Esophagus squamous epithelium (tissue), 5 donors: ENCODE measurements at regions of chr4 and their contacts with region 1.

Region 1: DNA sequence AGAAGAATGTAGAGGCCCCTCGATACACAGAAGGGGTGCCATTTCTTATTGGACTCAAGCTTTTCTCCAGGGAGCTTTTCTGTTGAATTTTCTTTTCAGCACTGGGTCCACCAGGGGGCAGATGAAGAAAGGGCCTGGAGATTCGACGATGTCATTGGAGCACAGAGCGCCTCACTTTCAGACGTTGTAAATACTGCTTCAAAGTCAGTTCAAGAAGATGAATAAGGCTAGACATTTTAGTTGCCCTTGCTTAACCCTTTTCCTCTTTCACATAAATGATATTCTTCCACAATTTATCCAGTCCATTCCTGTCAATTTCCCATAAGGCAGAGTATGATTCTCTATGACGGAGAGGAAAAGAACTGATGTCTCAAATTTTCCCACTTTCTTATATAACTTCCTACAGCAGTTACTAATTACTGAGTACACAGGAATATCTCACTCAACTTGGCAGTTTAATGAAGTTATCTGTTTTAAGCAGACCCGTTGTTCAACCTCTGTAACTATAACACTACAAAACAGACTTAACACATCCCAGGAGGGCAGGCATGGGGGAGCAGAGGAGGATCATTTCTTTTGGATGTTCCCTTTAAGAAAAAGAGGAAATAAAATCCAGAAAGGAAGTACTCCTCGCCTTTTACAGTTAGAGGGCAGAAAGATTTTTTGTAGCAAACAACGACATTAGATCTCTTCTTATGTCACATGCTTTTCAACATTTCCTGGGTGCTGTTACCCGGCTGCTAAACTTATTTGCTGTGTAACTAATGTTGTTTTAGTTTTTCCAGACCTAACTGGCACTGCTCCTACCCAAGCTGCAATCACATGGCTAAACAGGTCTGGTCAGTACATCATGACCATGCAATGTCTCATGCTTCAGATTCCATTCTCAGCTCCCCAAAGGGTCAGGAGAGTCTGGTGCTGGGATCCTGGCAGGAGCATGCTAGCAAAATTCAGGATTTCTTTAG is 12.2 kb upstream of the CENPU start:
- DNase-seq: no peak
- H3K4me3 ChIP-seq: peak overlapping the region in 1 of 4 donors; percentile 34
- H3K27ac ChIP-seq: peak overlapping the region; percentile 84 to 95 (median 89)
- H3K4me1 ChIP-seq: peaks cover 34 to 48% (median 35%) of the 10 kb centered on the region in 3 donors
- H3K27me3 ChIP-seq: no peaks in the 10 kb centered on the region
- CTCF ChIP-seq: peak; percentile 49 to 84 (median 80)
- POLR2A ChIP-seq: no peak

Region 2: GRCh38 chr4:184983672-184984356 is 237.7 kb after region 1 on chr4:
- intact Hi-C with region 1: loop called (anchors 10 kb)
- DNase-seq: no peak
- H3K4me3 ChIP-seq: peak overlapping the region in 1 of 4 donors; percentile 12
- H3K27ac ChIP-seq: no peak overlapping the region
- H3K4me1 ChIP-seq: peaks cover 0 to 10% (median 7%) of the 10 kb centered on the region in 3 donors
- H3K27me3 ChIP-seq: peaks cover 0 to 21% (median 0%) of the 10 kb centered on the region in 4 donors
- CTCF ChIP-seq: peak in 3 of 6 experiments; percentile 35 to 54 (median 38)
- POLR2A ChIP-seq: no peak